Activated CD8-positive, alpha-beta T cell treated with anti-CD3 and anti-CD28 coated beads, Interleukin-2, amount 10 ng/mL, durations not matched to agents 7 days and 5 days (primary cell): ENCODE measurements at regions of chr22 and their contacts with region 1.

Region 1: GRCh38 chr22:22156716-22157347 is 87.8 kb upstream of the VPREB1 start:
- DNase-seq: peak; percentile 83
- ATAC-seq: peak; percentile 82
- H3K4me3 Mint-ChIP-seq: no peak overlapping the region
- H3K27ac Mint-ChIP-seq: peak overlapping the region; percentile 56
- H3K4me1 Mint-ChIP-seq: peaks cover 8% of the 10 kb centered on the region
- H3K27me3 Mint-ChIP-seq: peaks cover 19% of the 10 kb centered on the region

Region 2: DNA sequence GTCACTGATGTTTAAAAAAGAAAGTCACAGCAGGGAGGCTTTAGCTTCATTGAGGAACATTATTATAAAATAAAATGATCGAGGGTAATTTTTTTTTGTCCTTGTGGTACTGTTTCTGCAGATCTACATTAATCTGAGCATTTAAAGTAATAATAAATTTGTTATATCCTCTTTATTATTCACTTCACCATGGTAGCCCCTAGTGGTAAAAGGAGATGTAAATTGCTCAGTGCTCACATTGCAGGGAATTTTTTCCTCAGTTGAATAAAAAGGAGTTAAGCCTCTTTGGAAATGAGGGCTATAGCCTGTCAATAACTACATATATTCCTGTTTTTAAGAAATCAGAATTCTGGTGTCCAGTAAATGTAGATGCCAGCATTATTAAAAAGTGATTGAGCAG is 12.0 kb before region 1 on chr22:
- CTCF ChIA-PET with region 1: interaction called, 15 read pairs
- POLR2A ChIA-PET with region 1: no interaction called
- DNase-seq: no peak
- ATAC-seq: no peak
- H3K4me3 Mint-ChIP-seq: no peak overlapping the region
- H3K27ac Mint-ChIP-seq: no peak overlapping the region
- H3K4me1 Mint-ChIP-seq: no peaks in the 10 kb centered on the region
- H3K27me3 Mint-ChIP-seq: peaks cover 46% of the 10 kb centered on the region

Region 3: GRCh38 chr22:22168190-22168940 is 11.5 kb after region 1 on chr22:
- CTCF ChIA-PET with region 1: interaction called, 19 read pairs
- POLR2A ChIA-PET with region 1: no interaction called
- DNase-seq: no peak
- ATAC-seq: peak; percentile 30
- H3K4me3 Mint-ChIP-seq: peak overlapping the region; percentile 45
- H3K27ac Mint-ChIP-seq: peak overlapping the region; percentile 71
- H3K4me1 Mint-ChIP-seq: peaks cover 13% of the 10 kb centered on the region
- H3K27me3 Mint-ChIP-seq: peaks cover 10% of the 10 kb centered on the region

Region 4: GRCh38 chr22:22195265-22196017 is 38.6 kb after region 1 on chr22:
- CTCF ChIA-PET with region 1: interaction called, 15 read pairs
- POLR2A ChIA-PET with region 1: no interaction called
- DNase-seq: peak; percentile 90
- ATAC-seq: peak; percentile 98
- H3K4me3 Mint-ChIP-seq: no peak overlapping the region
- H3K27ac Mint-ChIP-seq: no peak overlapping the region
- H3K4me1 Mint-ChIP-seq: peaks cover 2% of the 10 kb centered on the region
- H3K27me3 Mint-ChIP-seq: peaks cover 28% of the 10 kb centered on the region